CD8-positive, alpha-beta T cell (primary cell): ENCODE measurements at regions of chr7 and their contacts with region 1.

Region 1: GRCh38 chr7:134710859-134711624 is 64.4 kb downstream of the BPGM start:
- DNase-seq: peak; percentile 20 to 89 (median 63)
- ATAC-seq: peak; percentile 94
- H3K4me3 ChIP-seq: peak overlapping the region in 1 of 2 experiments; percentile 13
- H3K4me3 Mint-ChIP-seq: peak overlapping the region; percentile 6
- H3K27ac ChIP-seq: peak overlapping the region; percentile 50 to 62
- H3K27ac Mint-ChIP-seq: peak overlapping the region; percentile 91
- H3K4me1 ChIP-seq: peaks cover 16% of the 10 kb centered on the region
- H3K4me1 Mint-ChIP-seq: peaks cover 18% of the 10 kb centered on the region
- H3K27me3 ChIP-seq: no peaks in the 10 kb centered on the region
- H3K27me3 Mint-ChIP-seq: no peaks in the 10 kb centered on the region
- CTCF ChIP-seq: no peak

Region 2: GRCh38 chr7:134154581-134155130 is 556.4 kb before region 1 on chr7:
- CTCF ChIA-PET with region 1: no interaction called
- POLR2A ChIA-PET with region 1: no interaction called
- intact Hi-C with region 1: loop called in 1 of 2 experiments (anchors 5 kb)
- DNase-seq: no peak
- ATAC-seq: no peak
- H3K4me3 ChIP-seq: no peak overlapping the region
- H3K4me3 Mint-ChIP-seq: no peak overlapping the region
- H3K27ac ChIP-seq: no peak overlapping the region
- H3K27ac Mint-ChIP-seq: no peak overlapping the region
- H3K4me1 ChIP-seq: no peaks in the 10 kb centered on the region
- H3K4me1 Mint-ChIP-seq: no peaks in the 10 kb centered on the region
- H3K27me3 ChIP-seq: peaks cover 0 to 3% of the 10 kb centered on the region in 2 experiments
- H3K27me3 Mint-ChIP-seq: peaks cover 3% of the 10 kb centered on the region
- CTCF ChIP-seq: no peak

Region 3: GRCh38 chr7:134669845-134670373 is 41.1 kb before region 1 on chr7:
- CTCF ChIA-PET with region 1: no interaction called
- POLR2A ChIA-PET with region 1: no interaction called
- intact Hi-C with region 1: loop called in 1 of 2 experiments (anchors 5 kb)
- DNase-seq: peak; percentile 63 to 94 (median 89)
- ATAC-seq: peak; percentile 94
- H3K4me3 ChIP-seq: peak overlapping the region in 1 of 2 experiments; percentile 4
- H3K4me3 Mint-ChIP-seq: peak overlapping the region; percentile 68
- H3K27ac ChIP-seq: peak overlapping the region; percentile 65 to 82
- H3K27ac Mint-ChIP-seq: peak overlapping the region; percentile 95
- H3K4me1 ChIP-seq: peaks cover 34% of the 10 kb centered on the region
- H3K4me1 Mint-ChIP-seq: peaks cover 46% of the 10 kb centered on the region
- H3K27me3 ChIP-seq: no peaks in the 10 kb centered on the region
- H3K27me3 Mint-ChIP-seq: no peaks in the 10 kb centered on the region
- CTCF ChIP-seq: no peak

Region 4: GRCh38 chr7:134823400-134823799 is 112.4 kb after region 1 on chr7:
- CTCF ChIA-PET with region 1: no interaction called
- POLR2A ChIA-PET with region 1: no interaction called
- intact Hi-C with region 1: no loop called
- DNase-seq: no peak
- ATAC-seq: no peak
- H3K4me3 ChIP-seq: no peak overlapping the region
- H3K4me3 Mint-ChIP-seq: no peak overlapping the region
- H3K27ac ChIP-seq: no peak overlapping the region
- H3K27ac Mint-ChIP-seq: no peak overlapping the region
- H3K4me1 ChIP-seq: no peaks in the 10 kb centered on the region
- H3K4me1 Mint-ChIP-seq: no peaks in the 10 kb centered on the region
- H3K27me3 ChIP-seq: no peaks in the 10 kb centered on the region
- H3K27me3 Mint-ChIP-seq: no peaks in the 10 kb centered on the region
- CTCF ChIP-seq: no peak